ENCODE measurements at regions of chr19 and their contacts with region 1.

Region 1: DNA sequence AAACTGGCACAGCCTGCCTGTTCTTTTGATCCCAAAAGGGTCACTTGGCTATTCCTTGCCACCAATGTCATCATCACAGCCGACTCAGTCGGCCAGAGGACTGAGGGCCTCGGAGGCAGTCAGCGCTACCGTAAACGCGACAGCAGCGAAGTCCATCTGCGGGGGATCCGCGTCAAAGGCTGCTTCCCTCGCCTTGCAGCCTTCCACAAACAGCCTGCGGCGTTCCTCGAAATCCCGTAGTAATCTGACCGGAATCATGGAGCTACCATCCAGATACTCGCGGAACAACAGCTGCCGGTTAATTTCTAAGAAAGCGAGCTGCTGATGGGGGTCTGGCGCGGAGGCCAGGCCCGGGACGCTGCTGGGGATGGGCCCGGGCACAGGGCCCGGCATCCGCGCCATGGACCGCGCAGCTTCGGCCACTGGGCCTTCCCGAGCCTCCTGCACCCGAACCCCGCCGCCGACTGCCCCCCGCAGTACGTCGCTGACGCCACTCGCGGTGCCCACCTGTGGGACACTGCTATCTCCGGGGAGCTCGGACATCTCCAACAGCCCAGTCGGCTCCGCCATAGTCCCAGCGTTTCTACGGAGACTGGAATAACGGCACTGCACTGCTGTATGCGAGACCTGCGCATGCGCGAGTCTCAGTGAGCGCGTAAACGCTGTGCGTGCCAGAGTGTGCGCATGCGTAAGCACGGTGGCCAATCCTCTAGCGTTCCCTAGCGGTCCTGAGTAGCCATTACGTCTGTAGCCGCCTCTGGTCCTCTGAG is at the start of gene EID2B:
- DNase-seq: peak; percentile 83 to 98 (median 96)
- ATAC-seq: peak; percentile 98
- H3K4me3 ChIP-seq: peak within 1 kb of the TSS; percentile 77 to 93
- H3K4me3 Mint-ChIP-seq: peak within 1 kb of the TSS; percentile 93
- H3K27ac ChIP-seq: peak within 1 kb of the TSS; percentile 69 to 80
- H3K27ac Mint-ChIP-seq: peak within 1 kb of the TSS; percentile 87
- H3K4me1 ChIP-seq: peaks cover 9% of the 10 kb centered on the region
- H3K4me1 Mint-ChIP-seq: peaks cover 31% of the 10 kb centered on the region
- H3K27me3 ChIP-seq: no peaks in the 10 kb centered on the region
- H3K27me3 Mint-ChIP-seq: no peaks in the 10 kb centered on the region
- CTCF ChIP-seq: peak; percentile 99
- total RNA-seq, gene EID2B: 3.5 to 3.7 TPM

Region 2: DNA sequence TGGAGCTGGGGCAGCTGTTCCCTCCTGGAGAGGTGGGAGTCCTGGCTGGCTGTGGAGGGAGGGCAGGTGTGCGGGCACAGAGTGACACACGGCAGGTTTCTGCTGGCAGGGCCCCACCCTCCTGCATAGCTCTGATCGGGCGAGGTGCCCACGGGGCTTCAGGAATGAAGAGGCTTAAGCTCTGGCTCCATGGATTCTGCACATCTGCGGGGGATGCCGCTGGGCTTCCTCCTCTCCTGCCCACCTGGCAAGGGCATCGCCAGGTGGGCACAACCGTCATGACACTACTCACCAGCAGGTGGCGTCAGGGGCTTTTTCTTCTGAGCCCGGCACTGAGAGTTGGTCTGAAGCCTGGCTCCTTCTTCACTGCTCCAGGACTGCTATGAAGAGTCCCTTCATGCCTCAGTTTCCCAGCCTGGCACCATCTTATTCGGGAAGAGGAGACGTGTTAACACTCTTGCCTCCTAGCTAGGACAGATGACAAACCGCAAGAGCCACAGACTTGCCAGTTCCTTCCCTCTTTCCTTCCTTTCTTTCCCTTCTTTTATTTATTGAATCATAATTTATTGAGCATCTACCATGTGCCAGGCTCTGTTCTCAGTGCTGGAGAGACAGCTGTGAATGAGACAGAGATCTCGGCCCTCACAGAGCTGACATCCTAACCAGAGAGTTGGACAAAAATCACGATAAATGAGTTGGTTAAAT is 422.0 kb before region 1 on chr19:
- CTCF ChIA-PET with region 1: interaction called, 3 read pairs
- POLR2A ChIA-PET with region 1: no interaction called
- intact Hi-C with region 1: loop called in 1 of 2 experiments (anchors 2 kb)
- DNase-seq: peak; percentile 64 to 83 (median 73)
- ATAC-seq: peak; percentile 91
- H3K4me3 ChIP-seq: no peak overlapping the region
- H3K4me3 Mint-ChIP-seq: no peak overlapping the region
- H3K27ac ChIP-seq: no peak overlapping the region
- H3K27ac Mint-ChIP-seq: no peak overlapping the region
- H3K4me1 ChIP-seq: peaks cover 6% of the 10 kb centered on the region
- H3K4me1 Mint-ChIP-seq: no peaks in the 10 kb centered on the region
- H3K27me3 ChIP-seq: no peaks in the 10 kb centered on the region
- H3K27me3 Mint-ChIP-seq: no peaks in the 10 kb centered on the region
- CTCF ChIP-seq: peak; percentile 75

Region 3: DNA sequence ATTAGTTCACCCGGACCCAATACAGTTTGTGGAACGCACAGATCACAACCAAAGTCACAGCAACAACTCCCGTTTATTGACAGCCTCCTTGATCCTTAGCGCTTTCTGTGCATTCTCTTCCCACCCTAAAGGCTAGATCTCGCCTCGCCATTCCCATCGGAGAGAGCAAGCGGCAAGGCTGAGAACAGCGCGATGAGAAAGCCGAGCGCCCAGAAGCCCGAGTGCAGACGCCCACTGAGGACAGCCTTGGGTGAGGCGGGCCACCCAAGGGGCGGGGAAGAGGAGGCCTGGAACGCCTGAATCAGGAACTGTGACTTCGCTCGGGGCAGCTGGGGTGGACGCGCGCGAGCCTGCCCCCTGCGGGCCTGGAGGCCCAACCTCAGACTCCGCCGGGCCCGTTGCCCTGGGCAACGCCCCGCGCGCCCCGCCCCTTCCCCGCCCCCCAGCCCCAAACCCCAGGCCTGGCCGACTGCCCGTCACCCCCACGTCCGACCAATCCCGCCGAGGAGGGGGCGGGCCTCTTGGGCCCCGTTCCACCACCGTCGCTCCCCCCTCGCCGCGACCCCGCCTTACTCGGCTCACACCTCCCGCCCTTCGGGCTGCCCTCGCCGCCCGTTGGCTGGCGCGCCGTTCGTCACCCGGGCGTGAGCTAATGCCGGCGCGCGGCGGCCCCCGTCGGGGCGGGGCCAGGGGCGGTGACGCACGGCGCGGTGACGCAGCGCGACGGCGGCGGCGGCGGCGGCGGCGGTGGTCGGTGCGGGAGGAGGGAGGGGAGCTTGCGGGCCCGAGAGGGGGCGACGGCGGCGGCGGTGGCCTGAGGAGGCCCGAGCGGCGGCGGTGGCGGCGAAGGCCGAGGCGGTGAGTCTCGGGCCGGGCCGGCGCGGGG is 190.5 kb before region 1 on chr19 and contains the start of gene SAMD4B:
- CTCF ChIA-PET with region 1: no interaction called
- POLR2A ChIA-PET with region 1: no interaction called
- intact Hi-C with region 1: loop called (anchors 2 to 5 kb)
- DNase-seq: peak; percentile 98 to 100 (median 99)
- ATAC-seq: peak; percentile 90
- H3K4me3 ChIP-seq: peak within 1 kb of the TSS; percentile 93 to 97
- H3K4me3 Mint-ChIP-seq: peak within 1 kb of the TSS; percentile 100
- H3K27ac ChIP-seq: peak within 1 kb of the TSS; percentile 67 to 88
- H3K27ac Mint-ChIP-seq: peak within 1 kb of the TSS; percentile 98
- H3K4me1 ChIP-seq: peaks cover 29% of the 10 kb centered on the region
- H3K4me1 Mint-ChIP-seq: peaks cover 69% of the 10 kb centered on the region
- H3K27me3 ChIP-seq: no peaks in the 10 kb centered on the region
- H3K27me3 Mint-ChIP-seq: no peaks in the 10 kb centered on the region
- CTCF ChIP-seq: peak; percentile 73
- total RNA-seq, gene SAMD4B: 68.3 to 78.1 TPM

Region 4: DNA sequence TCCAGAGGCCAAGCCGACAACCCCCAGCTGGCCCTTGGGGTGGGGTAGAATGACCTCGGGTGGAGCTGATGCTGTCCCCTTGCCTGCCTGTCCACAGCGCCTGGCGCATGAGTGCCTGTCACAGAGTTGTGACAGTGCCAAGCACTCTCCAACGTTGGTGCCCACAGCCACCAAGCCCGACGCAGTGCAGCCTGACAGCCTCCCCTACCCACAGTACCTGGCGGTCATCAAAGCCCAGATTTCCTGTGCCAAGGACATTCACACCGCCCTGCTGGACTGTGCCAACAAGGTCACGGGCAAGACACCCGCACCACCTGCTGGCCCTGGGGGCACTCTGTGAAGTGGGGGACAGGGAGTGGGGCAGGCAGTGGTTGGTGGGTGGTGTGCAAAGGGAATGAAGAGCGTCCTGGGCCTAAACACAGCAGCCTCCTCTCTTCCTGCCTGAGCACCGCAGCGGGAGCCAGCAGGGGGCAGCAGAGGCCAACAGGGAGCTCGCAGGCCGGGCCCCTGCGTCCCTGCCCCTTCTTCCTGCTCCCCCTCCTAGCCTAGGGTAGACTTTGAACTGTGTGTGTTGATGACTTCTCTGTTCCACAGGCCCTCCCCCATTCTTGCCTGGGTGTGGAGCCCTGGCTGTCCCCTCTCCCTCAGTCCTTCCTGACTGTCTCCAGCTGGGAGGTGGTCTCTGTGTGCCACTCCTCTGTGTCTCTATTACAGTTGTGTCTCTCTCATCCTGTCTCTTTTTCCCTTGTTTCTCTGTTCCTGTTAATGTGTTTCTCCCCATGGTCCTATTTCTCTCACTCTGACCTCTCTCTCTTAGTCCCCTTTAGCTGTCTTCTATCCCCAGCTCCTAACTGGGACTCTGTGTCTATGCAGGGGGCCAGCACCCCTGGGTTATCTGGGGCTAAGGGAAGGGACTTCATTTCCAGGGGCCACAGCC is 134.8 kb before region 1 on chr19:
- CTCF ChIA-PET with region 1: interaction called, 3 read pairs
- POLR2A ChIA-PET with region 1: no interaction called
- intact Hi-C with region 1: loop called in 1 of 2 experiments (anchors 2 kb)
- DNase-seq: peak; percentile 88 to 98 (median 94)
- ATAC-seq: peak; percentile 41
- H3K4me3 ChIP-seq: peak overlapping the region; percentile 12 to 18
- H3K4me3 Mint-ChIP-seq: peak overlapping the region; percentile 71
- H3K27ac ChIP-seq: peak overlapping the region; percentile 33 to 92
- H3K27ac Mint-ChIP-seq: peak overlapping the region; percentile 96
- H3K4me1 ChIP-seq: peaks cover 51% of the 10 kb centered on the region
- H3K4me1 Mint-ChIP-seq: peaks cover 56% of the 10 kb centered on the region
- H3K27me3 ChIP-seq: no peaks in the 10 kb centered on the region
- H3K27me3 Mint-ChIP-seq: no peaks in the 10 kb centered on the region
- CTCF ChIP-seq: peak; percentile 94

Region 5: DNA sequence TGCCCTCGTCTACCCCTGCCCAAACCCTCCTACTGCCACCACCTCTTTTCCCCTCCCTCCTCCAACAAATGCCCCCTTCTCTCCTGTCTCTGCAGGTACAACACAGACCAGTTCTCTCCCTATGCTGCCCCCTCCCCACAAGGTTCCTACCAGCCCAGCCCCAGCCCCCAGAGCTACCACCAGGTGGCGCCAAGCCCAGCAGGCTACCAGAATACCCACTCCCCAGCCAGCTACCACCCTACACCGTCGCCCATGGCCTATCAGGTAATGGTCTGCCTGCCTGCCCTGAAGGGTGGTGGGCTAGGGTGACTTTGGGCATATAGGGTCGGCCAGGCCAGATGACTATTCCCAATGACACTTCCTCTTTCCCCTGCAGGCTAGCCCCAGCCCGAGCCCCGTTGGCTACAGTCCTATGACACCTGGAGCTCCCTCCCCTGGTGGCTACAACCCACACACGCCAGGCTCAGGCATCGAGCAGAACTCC is 58.2 kb before region 1 on chr19:
- CTCF ChIA-PET with region 1: interaction called, 36 read pairs
- POLR2A ChIA-PET with region 1: interaction called, 3 read pairs
- intact Hi-C with region 1: loop called (anchors 1 kb)
- DNase-seq: peak; percentile 43 to 81 (median 75)
- ATAC-seq: peak; percentile 81
- H3K4me3 ChIP-seq: no peak overlapping the region
- H3K4me3 Mint-ChIP-seq: no peak overlapping the region
- H3K27ac ChIP-seq: no peak overlapping the region
- H3K27ac Mint-ChIP-seq: no peak overlapping the region
- H3K4me1 ChIP-seq: no peaks in the 10 kb centered on the region
- H3K4me1 Mint-ChIP-seq: no peaks in the 10 kb centered on the region
- H3K27me3 ChIP-seq: no peaks in the 10 kb centered on the region
- H3K27me3 Mint-ChIP-seq: no peaks in the 10 kb centered on the region
- CTCF ChIP-seq: peak; percentile 56

Region 6: GRCh38 chr19:39514840-39515550 is 17.4 kb before region 1 on chr19 and contains the start of gene SELENOV:
- CTCF ChIA-PET with region 1: interaction called, 11 read pairs
- POLR2A ChIA-PET with region 1: no interaction called
- intact Hi-C with region 1: no loop called
- DNase-seq: peak in 5 of 9 experiments; percentile 23 to 57 (median 50)
- ATAC-seq: peak; percentile 78
- H3K4me3 ChIP-seq: peak within 1 kb of the TSS; percentile 39 to 49
- H3K4me3 Mint-ChIP-seq: peak within 1 kb of the TSS; percentile 76
- H3K27ac ChIP-seq: no peak within 1 kb of the TSS
- H3K27ac Mint-ChIP-seq: no peak within 1 kb of the TSS
- H3K4me1 ChIP-seq: peaks cover 20% of the 10 kb centered on the region
- H3K4me1 Mint-ChIP-seq: peaks cover 10% of the 10 kb centered on the region
- H3K27me3 ChIP-seq: peaks cover 29 to 30% of the 10 kb centered on the region in 2 experiments
- H3K27me3 Mint-ChIP-seq: peaks cover 36% of the 10 kb centered on the region
- CTCF ChIP-seq: no peak
- total RNA-seq, gene SELENOV: not detected

Region 7: DNA sequence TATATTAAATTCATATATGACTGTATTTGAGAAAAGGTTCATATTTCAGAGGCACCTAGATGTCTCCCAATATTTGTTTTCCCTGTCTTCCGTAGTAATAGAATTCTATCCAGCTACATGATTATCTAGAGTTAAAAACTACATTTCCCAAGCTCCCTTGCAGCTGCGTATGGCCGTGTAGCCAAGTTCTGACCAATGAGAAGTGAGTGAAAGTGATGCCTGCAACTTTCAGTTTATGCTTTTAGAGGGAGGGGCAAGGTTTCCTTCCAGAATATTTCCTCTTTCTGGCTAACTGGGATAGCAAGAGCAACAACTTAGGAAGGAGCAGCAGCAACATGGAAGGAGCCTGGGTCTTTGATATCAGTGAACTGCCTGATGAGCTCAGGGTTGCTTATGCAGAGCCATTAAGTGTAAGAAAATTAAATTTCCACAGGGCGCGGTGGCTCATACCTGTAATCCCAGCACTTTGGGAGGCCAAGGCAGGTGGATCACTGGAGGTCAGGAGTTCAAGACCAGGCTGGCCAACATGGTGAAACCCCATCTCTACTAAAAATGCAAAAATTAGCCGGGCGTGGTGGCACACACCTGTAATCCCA is 1532.7 kb after region 1 on chr19:
- CTCF ChIA-PET with region 1: no interaction called
- POLR2A ChIA-PET with region 1: no interaction called
- intact Hi-C with region 1: no loop called
- DNase-seq: peak in 1 of 9 experiments; percentile 19
- ATAC-seq: no peak
- H3K4me3 ChIP-seq: no peak overlapping the region
- H3K4me3 Mint-ChIP-seq: no peak overlapping the region
- H3K27ac ChIP-seq: no peak overlapping the region
- H3K27ac Mint-ChIP-seq: no peak overlapping the region
- H3K4me1 ChIP-seq: no peaks in the 10 kb centered on the region
- H3K4me1 Mint-ChIP-seq: no peaks in the 10 kb centered on the region
- H3K27me3 ChIP-seq: peaks cover 0 to 4% of the 10 kb centered on the region in 2 experiments
- H3K27me3 Mint-ChIP-seq: peaks cover 18% of the 10 kb centered on the region
- CTCF ChIP-seq: no peak

Measured in CD8-positive, alpha-beta T cell (primary cell).